Pancreas (tissue), 10 donors: ENCODE measurements at regions of chr17 and their contacts with region 1.

Region 1: DNA sequence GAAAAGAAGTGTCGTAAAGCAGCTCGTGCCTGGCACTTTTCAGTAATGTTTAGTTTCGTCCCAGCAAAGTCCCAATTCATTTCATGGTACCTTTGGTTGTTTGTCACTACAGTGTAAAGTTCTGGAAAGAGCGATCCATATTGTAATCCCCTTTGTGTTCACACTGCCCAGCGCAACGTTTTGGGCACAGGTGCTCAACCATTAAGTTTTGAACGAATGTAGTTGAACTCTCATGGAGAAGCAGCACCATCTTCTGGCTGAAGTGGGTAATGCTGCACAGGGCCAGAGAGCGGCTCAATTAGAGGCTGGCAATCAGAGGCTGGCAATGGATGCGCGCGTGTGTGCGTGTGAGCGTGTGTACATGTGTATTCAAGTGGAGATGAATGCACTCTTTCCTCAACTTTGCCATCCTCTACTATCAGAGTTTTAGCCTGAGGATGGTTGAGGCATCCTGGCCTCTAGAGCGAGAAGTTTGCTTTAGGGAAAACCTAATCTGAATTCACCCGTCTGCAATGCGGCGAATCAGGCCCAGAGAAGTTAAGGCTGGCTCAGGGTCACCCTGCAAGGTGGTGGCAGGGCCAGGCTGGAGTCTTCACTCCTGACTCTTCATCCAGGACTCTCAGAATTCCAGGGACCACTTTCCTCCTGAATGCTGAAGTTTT is 29.9 kb downstream of the DYNLL2 start:
- DNase-seq: peak; percentile 59 to 90 (median 78)
- ATAC-seq: peak; percentile 85 to 99 (median 98)
- H3K4me3 ChIP-seq: no peak overlapping the region
- H3K27ac ChIP-seq: no peak overlapping the region
- H3K4me1 ChIP-seq: no peaks in the 10 kb centered on the region
- H3K27me3 ChIP-seq: no peaks in the 10 kb centered on the region
- CTCF ChIP-seq: peak; percentile 77 to 89 (median 88)

Region 2: GRCh38 chr17:57130761-57131461 is 982.2 kb before region 1 on chr17:
- intact Hi-C with region 1: loop called in 1 of 3 experiments (anchors 10 kb)
- DNase-seq: peak; percentile 72 to 89 (median 85)
- ATAC-seq: peak; percentile 96 to 100 (median 98)
- H3K4me3 ChIP-seq: no peak overlapping the region
- H3K27ac ChIP-seq: no peak overlapping the region
- H3K4me1 ChIP-seq: peaks cover 0 to 4% (median 0%) of the 10 kb centered on the region in 3 donors
- H3K27me3 ChIP-seq: no peaks in the 10 kb centered on the region
- CTCF ChIP-seq: peak; percentile 82 to 89 (median 86)

Region 3: GRCh38 chr17:57849874-57850754 is 263.0 kb before region 1 on chr17 and contains the start of gene MRPS23:
- intact Hi-C with region 1: loop called in 1 of 3 experiments (anchors 10 kb)
- DNase-seq: peak; percentile 95 to 99 (median 98)
- ATAC-seq: peak; percentile 92 to 97 (median 94)
- H3K4me3 ChIP-seq: peak within 1 kb of the TSS; percentile 75 to 92 (median 84)
- H3K27ac ChIP-seq: peak within 1 kb of the TSS; percentile 53 to 96 (median 86)
- H3K4me1 ChIP-seq: peaks cover 21 to 39% (median 26%) of the 10 kb centered on the region in 3 donors
- H3K27me3 ChIP-seq: no peaks in the 10 kb centered on the region
- CTCF ChIP-seq: no peak
- total RNA-seq, gene MRPS23: 12.7 to 25.4 (median 15.5) TPM

Region 4: GRCh38 chr17:57868007-57868909 is 244.8 kb before region 1 on chr17:
- intact Hi-C with region 1: loop called in 1 of 3 experiments (anchors 10 kb)
- DNase-seq: peak; percentile 78 to 92 (median 88)
- ATAC-seq: peak; percentile 90 to 93 (median 92)
- H3K4me3 ChIP-seq: no peak overlapping the region
- H3K27ac ChIP-seq: peak overlapping the region; percentile 62 to 87 (median 80)
- H3K4me1 ChIP-seq: peaks cover 5 to 22% (median 19%) of the 10 kb centered on the region in 3 donors
- H3K27me3 ChIP-seq: no peaks in the 10 kb centered on the region
- CTCF ChIP-seq: peak in 1 of 4 donors; percentile 18

Region 5: DNA sequence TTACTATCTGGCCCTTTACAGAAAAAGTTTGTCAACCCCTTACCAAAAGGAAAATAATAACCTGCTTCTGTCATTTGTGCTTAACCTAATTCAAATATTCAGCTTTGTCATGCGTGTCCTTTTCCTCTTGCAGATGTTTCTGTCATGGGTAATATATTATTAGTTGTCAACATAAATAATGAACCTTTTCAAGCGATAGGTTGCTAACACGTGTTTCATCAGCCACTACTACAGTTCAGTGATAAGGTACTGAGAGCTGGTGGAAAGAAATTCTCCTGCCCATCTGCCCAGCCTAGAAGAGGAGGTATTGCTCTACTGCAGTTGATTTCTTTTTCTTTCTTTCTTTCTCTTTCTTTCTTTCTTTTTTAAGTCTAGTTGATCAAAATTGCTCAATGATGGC is 94.1 kb before region 1 on chr17:
- intact Hi-C with region 1: loop called in 1 of 3 experiments (anchors 10 kb)
- DNase-seq: no peak
- ATAC-seq: no peak
- H3K4me3 ChIP-seq: no peak overlapping the region
- H3K27ac ChIP-seq: no peak overlapping the region
- H3K4me1 ChIP-seq: no peaks in the 10 kb centered on the region
- H3K27me3 ChIP-seq: no peaks in the 10 kb centered on the region
- CTCF ChIP-seq: no peak

Region 6: GRCh38 chr17:58249270-58250133 is 136.4 kb after region 1 on chr17:
- intact Hi-C with region 1: no loop called
- DNase-seq: peak; percentile 39 to 88 (median 72)
- ATAC-seq: peak; percentile 89 to 98 (median 96)
- H3K4me3 ChIP-seq: peak overlapping the region; percentile 5 to 51 (median 22)
- H3K27ac ChIP-seq: no peak overlapping the region
- H3K4me1 ChIP-seq: no peaks in the 10 kb centered on the region
- H3K27me3 ChIP-seq: no peaks in the 10 kb centered on the region
- CTCF ChIP-seq: peak; percentile 94 to 99 (median 96)